IMR-90 (cell line): ENCODE measurements at regions of chr6 and their contacts with region 1.

Region 1: GRCh38 chr6:150334790-150335783 is 33.7 kb upstream of the IYD start:
- DNase-seq: peak; percentile 82
- ATAC-seq: peak; percentile 75
- H3K4me3 ChIP-seq: no peak overlapping the region
- H3K27ac ChIP-seq: no peak overlapping the region
- H3K4me1 ChIP-seq: no peaks in the 10 kb centered on the region
- H3K27me3 ChIP-seq: peaks cover 6% of the 10 kb centered on the region
- CTCF ChIP-seq: peak; percentile 89
- POLR2A ChIP-seq: no peak
- RAD21 ChIP-seq: peak; percentile 90

Region 2: GRCh38 chr6:150354754-150355571 is 19.9 kb after region 1 on chr6:
- CTCF ChIA-PET with region 1: interaction called, 3 read pairs
- POLR2A ChIA-PET with region 1: no interaction called
- dilution Hi-C with region 1: no loop called
- in situ Hi-C with region 1: no loop called
- intact Hi-C with region 1: loop called (anchors 1 kb)
- DNase-seq: peak; percentile 6
- ATAC-seq: peak; percentile 48; the same call in 1 of the 2 replicates
- H3K4me3 ChIP-seq: no peak overlapping the region
- H3K27ac ChIP-seq: no peak overlapping the region
- H3K4me1 ChIP-seq: no peaks in the 10 kb centered on the region; the same call in 1 of the 2 replicates
- H3K27me3 ChIP-seq: no peaks in the 10 kb centered on the region
- CTCF ChIP-seq: no peak
- POLR2A ChIP-seq: no peak
- RAD21 ChIP-seq: no peak

Region 3: GRCh38 chr6:150547502-150548222 is 212.6 kb after region 1 on chr6:
- CTCF ChIA-PET with region 1: no interaction called
- POLR2A ChIA-PET with region 1: no interaction called
- dilution Hi-C with region 1: no loop called
- in situ Hi-C with region 1: no loop called
- intact Hi-C with region 1: no loop called
- DNase-seq: no peak
- ATAC-seq: no peak
- H3K4me3 ChIP-seq: no peak overlapping the region
- H3K27ac ChIP-seq: no peak overlapping the region
- H3K4me1 ChIP-seq: no peaks in the 10 kb centered on the region
- H3K27me3 ChIP-seq: no peaks in the 10 kb centered on the region; the same call in 1 of the 2 replicates
- CTCF ChIP-seq: no peak
- POLR2A ChIP-seq: no peak
- RAD21 ChIP-seq: no peak